ENCODE measurements at regions of chr15 and their contacts with region 1.

Region 1: GRCh38 chr15:34665498-34666116 is 82.2 kb upstream of the GOLGA8B start:
- DNase-seq: no peak
- ATAC-seq: no peak
- H3K4me3 ChIP-seq: no peak overlapping the region
- H3K4me3 Mint-ChIP-seq: no peak overlapping the region
- H3K27ac ChIP-seq: no peak overlapping the region
- H3K27ac Mint-ChIP-seq: no peak overlapping the region
- H3K4me1 ChIP-seq: no peaks in the 10 kb centered on the region
- H3K4me1 Mint-ChIP-seq: no peaks in the 10 kb centered on the region
- H3K27me3 ChIP-seq: no peaks in the 10 kb centered on the region
- H3K27me3 Mint-ChIP-seq: peaks cover 12% of the 10 kb centered on the region
- CTCF ChIP-seq: no peak

Region 2: DNA sequence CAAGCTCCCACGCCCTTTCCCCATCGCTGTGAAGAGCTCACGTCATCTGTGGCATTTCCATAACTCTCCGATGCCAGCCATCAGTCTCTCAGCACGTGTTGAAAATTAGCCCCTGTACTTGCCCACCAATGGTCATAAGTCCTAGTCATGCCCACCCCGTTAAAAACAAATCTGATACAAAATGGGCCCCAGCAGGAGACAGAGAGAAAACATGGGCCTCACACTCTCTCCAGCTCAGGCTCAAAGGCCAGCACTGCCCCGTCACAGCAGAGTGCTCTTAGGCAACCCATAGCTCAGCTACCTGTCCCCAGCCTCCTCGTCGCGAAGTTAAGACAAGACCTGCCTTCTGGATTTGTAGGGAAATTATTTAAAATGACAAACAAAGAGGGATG is 87.3 kb before region 1 on chr15:
- CTCF ChIA-PET with region 1: no interaction called
- POLR2A ChIA-PET with region 1: no interaction called
- intact Hi-C with region 1: no loop called
- DNase-seq: no peak
- ATAC-seq: no peak
- H3K4me3 ChIP-seq: no peak overlapping the region
- H3K4me3 Mint-ChIP-seq: no peak overlapping the region
- H3K27ac ChIP-seq: no peak overlapping the region
- H3K27ac Mint-ChIP-seq: no peak overlapping the region
- H3K4me1 ChIP-seq: peaks cover 11% of the 10 kb centered on the region
- H3K4me1 Mint-ChIP-seq: peaks cover 55% of the 10 kb centered on the region
- H3K27me3 ChIP-seq: no peaks in the 10 kb centered on the region
- H3K27me3 Mint-ChIP-seq: no peaks in the 10 kb centered on the region
- CTCF ChIP-seq: no peak

Region 3: GRCh38 chr15:34691034-34691433 is 25.4 kb after region 1 on chr15:
- CTCF ChIA-PET with region 1: no interaction called
- POLR2A ChIA-PET with region 1: no interaction called
- intact Hi-C with region 1: loop called in 1 of 2 experiments (anchors 2 kb)
- DNase-seq: no peak
- ATAC-seq: no peak
- H3K4me3 ChIP-seq: no peak overlapping the region
- H3K4me3 Mint-ChIP-seq: no peak overlapping the region
- H3K27ac ChIP-seq: no peak overlapping the region
- H3K27ac Mint-ChIP-seq: no peak overlapping the region
- H3K4me1 ChIP-seq: no peaks in the 10 kb centered on the region
- H3K4me1 Mint-ChIP-seq: no peaks in the 10 kb centered on the region
- H3K27me3 ChIP-seq: no peaks in the 10 kb centered on the region
- H3K27me3 Mint-ChIP-seq: peaks cover 14% of the 10 kb centered on the region
- CTCF ChIP-seq: no peak

Measured in CD8-positive, alpha-beta T cell (primary cell).